ENCODE measurements at regions of chr6 and their contacts with region 1.

Region 1: GRCh38 chr6:143299253-143300166 is 151.0 kb downstream of the ADAT2 start:
- DNase-seq: no peak
- H3K4me3 ChIP-seq: no peak overlapping the region
- CTCF ChIP-seq: no peak

Region 2: DNA sequence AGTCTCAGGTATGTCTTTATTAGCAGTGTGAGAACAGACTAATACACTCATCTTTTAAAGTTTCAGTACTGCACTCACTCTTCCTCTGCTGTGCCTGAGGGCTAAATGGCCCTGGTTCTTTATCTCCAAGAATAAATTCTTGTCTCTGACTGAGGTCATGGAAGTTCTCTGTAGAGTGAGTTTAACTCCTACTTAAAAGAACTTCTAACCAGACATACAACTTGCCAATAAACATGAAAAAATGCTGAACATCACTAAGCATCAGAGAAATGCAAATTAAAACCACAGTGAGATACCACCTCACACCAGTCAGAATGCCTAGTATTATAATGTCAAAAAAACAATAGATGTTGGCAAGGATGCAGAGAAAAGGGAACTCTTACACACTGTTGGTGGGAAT is 77.4 kb after region 1 on chr6:
- in situ Hi-C with region 1: loop called (anchors 5 kb)
- DNase-seq: no peak
- H3K4me3 ChIP-seq: no peak overlapping the region
- CTCF ChIP-seq: no peak

Measured in astrocyte of the cerebellum (primary cell).